ENCODE measurements at regions of chr3 and their contacts with region 1.

Region 1: GRCh38 chr3:195914648-195915473 is 6.5 kb upstream of the TNK2 start:
- DNase-seq: peak; percentile 96
- H3K4me3 Mint-ChIP-seq: no peak overlapping the region
- H3K27ac Mint-ChIP-seq: peak overlapping the region; percentile 21
- H3K4me1 Mint-ChIP-seq: peaks cover 11% of the 10 kb centered on the region
- H3K27me3 Mint-ChIP-seq: peaks cover 38% of the 10 kb centered on the region
- CTCF ChIP-seq: peak; percentile 92

Region 2: DNA sequence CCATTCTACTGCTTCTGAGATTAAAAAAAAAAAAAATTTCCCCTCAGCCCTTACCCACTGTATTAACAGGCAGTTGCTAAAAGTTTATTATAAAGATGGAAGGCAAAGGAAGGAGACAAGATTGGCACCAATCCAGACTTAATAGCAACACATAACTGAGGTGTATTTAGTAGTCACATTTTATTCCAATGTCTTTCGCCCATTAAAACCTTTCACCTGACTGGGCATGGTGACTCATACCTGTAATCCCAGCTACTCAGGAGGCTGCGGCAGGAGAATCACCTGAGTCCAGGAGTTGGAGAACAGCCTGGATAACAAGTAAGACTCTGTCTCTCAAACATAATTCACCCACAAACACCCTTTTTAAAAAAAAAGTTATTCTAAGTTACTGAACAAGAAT is 476.5 kb before region 1 on chr3:
- CTCF ChIA-PET with region 1: no interaction called
- intact Hi-C with region 1: no loop called
- DNase-seq: peak; percentile 76
- H3K4me3 Mint-ChIP-seq: no peak overlapping the region
- H3K27ac Mint-ChIP-seq: no peak overlapping the region
- H3K4me1 Mint-ChIP-seq: peaks cover 22% of the 10 kb centered on the region
- H3K27me3 Mint-ChIP-seq: no peaks in the 10 kb centered on the region
- CTCF ChIP-seq: no peak

Region 3: DNA sequence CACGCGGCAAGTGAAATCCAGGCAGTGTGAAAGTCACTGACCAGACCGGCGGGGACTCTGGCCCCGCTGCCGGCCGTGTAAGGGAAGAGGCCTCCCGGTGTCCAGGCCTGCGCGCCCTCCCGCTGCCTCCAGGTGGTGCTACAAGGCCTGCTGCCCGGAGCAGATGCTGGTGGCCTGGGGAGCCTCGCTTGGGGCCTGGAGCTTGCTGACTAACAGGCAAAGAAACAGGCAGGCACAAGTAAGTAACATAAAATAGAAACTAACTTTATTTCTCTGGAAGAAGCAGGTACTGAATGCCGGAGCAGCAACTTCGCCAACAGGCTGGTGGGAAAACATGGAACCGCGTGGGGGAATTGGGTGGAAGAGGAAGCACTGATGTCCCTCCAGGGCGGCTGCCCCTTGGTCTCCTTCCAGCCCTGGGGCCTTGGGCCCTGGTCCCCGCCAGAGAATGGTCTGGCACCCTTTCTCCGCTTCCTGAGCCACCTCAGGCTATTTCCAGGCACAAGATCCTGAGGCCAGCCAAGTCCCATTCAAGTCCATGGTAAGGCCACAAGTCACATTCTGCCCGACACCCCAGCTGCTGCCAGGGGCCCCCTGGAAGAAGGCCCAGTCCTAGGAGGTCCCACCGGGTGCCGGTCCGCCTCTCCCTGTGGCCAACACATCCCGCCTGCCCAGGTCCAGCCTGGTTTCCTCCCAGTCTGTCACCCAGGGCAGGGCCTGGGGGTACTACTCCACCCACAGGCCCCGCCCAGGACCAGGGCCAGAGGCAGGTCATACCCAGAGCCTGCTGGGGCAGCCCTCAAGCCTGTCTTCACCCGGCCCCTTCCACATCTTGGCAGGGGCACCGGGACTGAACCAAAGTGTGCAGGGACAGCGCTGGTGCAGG is 51.5 kb before region 1 on chr3:
- CTCF ChIA-PET with region 1: interaction called, 4 read pairs
- intact Hi-C with region 1: loop called (anchors 1 kb)
- DNase-seq: peak; percentile 90
- H3K4me3 Mint-ChIP-seq: no peak overlapping the region
- H3K27ac Mint-ChIP-seq: no peak overlapping the region
- H3K4me1 Mint-ChIP-seq: peaks cover 15% of the 10 kb centered on the region
- H3K27me3 Mint-ChIP-seq: peaks cover 18% of the 10 kb centered on the region
- CTCF ChIP-seq: peak; percentile 88

Region 4: GRCh38 chr3:196016485-196016884 is 101.6 kb after region 1 on chr3:
- CTCF ChIA-PET with region 1: no interaction called
- intact Hi-C with region 1: no loop called
- DNase-seq: peak; percentile 19
- H3K4me3 Mint-ChIP-seq: no peak overlapping the region
- H3K27ac Mint-ChIP-seq: no peak overlapping the region
- H3K4me1 Mint-ChIP-seq: peaks cover 7% of the 10 kb centered on the region
- H3K27me3 Mint-ChIP-seq: peaks cover 37% of the 10 kb centered on the region
- CTCF ChIP-seq: no peak